Activated CD4-positive, alpha-beta T cell treated with anti-CD3 and anti-CD28 coated beads for 36 hours (primary cell): ENCODE measurements at regions of chr16 and their contacts with region 1.

Region 1: GRCh38 chr16:89720813-89721545 is at the starts of genes VPS9D1 and ZNF276:
- DNase-seq: peak; percentile 92
- ATAC-seq: peak; percentile 49
- H3K4me3 Mint-ChIP-seq: peak within 1 kb of the TSS; percentile 85
- H3K27ac Mint-ChIP-seq: peak within 1 kb of the TSS; percentile 84
- H3K4me1 Mint-ChIP-seq: peaks cover 40% of the 10 kb centered on the region
- H3K27me3 Mint-ChIP-seq: no peaks in the 10 kb centered on the region
- total RNA-seq, gene VPS9D1: 2.0 to 2.6 TPM
- total RNA-seq, gene ZNF276: 21.3 to 24.8 TPM

Region 2: DNA sequence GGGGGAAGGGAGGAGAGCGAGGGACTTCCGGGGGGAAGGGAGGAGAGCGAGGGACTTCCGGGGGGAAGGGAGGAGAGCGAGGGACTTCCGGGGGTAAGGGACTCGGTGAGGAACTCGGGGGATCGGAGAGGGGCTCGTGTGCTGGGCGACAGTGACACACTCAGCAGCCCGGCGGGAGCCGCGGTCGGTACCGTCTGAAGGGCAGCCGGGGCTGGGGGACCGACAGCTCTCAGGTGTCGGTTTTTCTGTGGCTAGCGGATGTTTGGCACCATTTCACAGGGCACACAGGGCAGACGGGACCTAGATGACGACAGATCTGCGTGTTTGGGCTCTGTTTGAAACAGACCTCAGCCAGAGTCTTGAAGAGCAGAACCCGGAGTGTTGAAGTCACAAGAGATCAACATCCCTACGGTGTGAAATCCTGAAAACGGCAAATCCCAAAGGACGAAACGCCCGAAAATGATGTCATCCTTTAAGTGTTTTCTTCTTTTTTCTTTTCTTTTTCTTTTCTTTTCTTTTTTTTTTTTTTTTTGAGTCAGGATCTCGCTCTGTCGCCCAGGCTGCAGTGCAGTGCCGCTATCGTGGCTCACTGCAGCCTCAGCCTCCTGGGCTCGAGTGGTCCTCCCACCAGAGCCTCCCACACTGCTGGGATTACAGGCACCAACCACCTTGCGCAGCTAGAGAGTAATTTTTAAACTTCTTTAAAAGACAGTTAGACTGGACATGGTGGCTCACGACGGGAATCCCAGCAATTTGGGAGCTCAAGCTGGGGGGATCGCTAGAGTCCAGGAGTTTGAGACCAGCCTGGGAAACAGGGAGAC is 479.6 kb before region 1 on chr16:
- CTCF ChIA-PET with region 1: no interaction called
- POLR2A ChIA-PET with region 1: no interaction called
- intact Hi-C with region 1: loop called in 1 of 2 experiments (anchors 1 kb)
- DNase-seq: peak; percentile 83
- ATAC-seq: peak; percentile 83
- H3K4me3 Mint-ChIP-seq: peak overlapping the region; percentile 87
- H3K27ac Mint-ChIP-seq: peak overlapping the region; percentile 100
- H3K4me1 Mint-ChIP-seq: peaks cover 14% of the 10 kb centered on the region
- H3K27me3 Mint-ChIP-seq: no peaks in the 10 kb centered on the region

Region 3: DNA sequence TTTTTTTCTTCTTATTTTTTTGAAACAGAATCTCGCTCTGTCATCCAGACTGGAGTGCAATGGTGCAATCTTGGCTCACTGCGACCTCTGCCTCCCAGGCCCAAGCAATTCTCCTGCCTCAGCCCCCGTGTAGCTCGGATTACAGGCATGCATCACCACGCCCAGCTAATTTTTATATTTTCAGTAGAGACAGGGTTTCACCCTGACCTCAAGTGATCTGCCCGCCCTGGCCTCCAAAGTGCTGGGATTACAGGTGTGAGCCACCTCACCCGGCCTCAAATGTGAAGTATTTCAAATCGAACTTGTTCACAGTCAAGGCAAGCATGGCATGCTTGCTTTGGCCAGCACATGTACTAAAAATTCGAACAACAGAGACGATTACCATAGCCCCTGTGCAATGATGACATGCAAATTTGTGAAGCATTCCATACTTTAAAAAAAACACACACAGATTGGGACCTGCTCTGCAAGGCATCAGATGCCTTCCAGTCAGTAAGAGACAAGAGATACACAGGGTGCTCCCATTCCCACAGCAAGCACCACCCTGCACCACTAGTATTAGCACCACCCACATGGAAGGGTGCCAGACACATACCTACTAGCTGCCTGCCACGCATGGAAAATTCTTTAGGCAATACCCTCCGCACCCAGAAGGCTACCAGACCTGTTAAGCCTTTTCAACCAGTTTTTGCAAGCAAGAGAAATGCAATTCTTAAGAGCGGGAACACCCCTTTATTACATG is 277.8 kb before region 1 on chr16:
- CTCF ChIA-PET with region 1: no interaction called
- POLR2A ChIA-PET with region 1: no interaction called
- intact Hi-C with region 1: no loop called
- DNase-seq: no peak
- ATAC-seq: no peak
- H3K4me3 Mint-ChIP-seq: peak overlapping the region; percentile 15
- H3K27ac Mint-ChIP-seq: peak overlapping the region; percentile 18
- H3K4me1 Mint-ChIP-seq: peaks cover 97% of the 10 kb centered on the region
- H3K27me3 Mint-ChIP-seq: no peaks in the 10 kb centered on the region

Region 4: DNA sequence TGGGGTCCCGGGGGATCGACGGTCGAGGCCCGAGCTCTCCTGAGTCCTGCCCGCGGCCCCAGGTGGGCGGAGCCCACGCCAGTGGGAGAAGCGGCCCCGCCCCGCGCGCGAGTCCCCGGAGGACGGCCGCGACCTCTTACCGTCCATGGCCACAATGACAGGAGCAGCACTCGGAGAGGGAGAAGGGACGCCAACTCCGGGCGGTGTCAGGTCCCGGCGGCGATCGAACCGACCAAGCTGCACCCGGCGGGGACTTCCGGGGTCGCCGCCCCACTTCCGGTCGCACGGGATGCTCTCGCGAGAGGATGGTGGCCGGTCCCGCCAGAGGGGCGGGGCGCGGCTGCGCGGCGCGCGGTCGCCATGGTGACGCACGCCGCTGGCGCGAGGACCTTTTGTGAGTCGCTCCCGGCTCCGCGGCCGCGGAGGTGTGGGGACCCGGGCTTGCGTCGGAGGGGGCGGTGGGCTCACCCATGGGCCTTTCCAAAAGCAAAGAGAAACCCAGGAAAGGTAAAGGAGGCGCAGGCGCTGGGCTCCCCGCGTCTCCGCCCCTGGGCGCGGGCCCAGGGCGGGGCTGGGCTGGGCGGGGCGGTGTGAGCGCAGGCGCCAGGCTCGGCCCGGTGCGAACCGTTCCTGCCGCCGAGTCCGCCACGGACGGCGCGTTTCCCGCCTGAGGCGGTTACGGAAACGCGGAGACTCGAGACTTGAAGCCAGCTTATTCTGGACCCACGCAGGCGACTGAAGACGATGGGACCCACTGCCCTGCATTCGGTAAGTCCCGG is 63.3 kb before region 1 on chr16 and contains the starts of genes CHMP1A and SPATA33:
- CTCF ChIA-PET with region 1: no interaction called
- POLR2A ChIA-PET with region 1: no interaction called
- intact Hi-C with region 1: loop called in 1 of 2 experiments (anchors 1 kb)
- DNase-seq: peak; percentile 96
- ATAC-seq: peak; percentile 93
- H3K4me3 Mint-ChIP-seq: peak within 1 kb of the TSS; percentile 90
- H3K27ac Mint-ChIP-seq: peak within 1 kb of the TSS; percentile 83
- H3K4me1 Mint-ChIP-seq: peaks cover 28% of the 10 kb centered on the region
- H3K27me3 Mint-ChIP-seq: no peaks in the 10 kb centered on the region
- total RNA-seq, gene CHMP1A: 37.9 to 67.3 TPM
- total RNA-seq, gene SPATA33: 6.8 to 11.6 TPM

Region 5: DNA sequence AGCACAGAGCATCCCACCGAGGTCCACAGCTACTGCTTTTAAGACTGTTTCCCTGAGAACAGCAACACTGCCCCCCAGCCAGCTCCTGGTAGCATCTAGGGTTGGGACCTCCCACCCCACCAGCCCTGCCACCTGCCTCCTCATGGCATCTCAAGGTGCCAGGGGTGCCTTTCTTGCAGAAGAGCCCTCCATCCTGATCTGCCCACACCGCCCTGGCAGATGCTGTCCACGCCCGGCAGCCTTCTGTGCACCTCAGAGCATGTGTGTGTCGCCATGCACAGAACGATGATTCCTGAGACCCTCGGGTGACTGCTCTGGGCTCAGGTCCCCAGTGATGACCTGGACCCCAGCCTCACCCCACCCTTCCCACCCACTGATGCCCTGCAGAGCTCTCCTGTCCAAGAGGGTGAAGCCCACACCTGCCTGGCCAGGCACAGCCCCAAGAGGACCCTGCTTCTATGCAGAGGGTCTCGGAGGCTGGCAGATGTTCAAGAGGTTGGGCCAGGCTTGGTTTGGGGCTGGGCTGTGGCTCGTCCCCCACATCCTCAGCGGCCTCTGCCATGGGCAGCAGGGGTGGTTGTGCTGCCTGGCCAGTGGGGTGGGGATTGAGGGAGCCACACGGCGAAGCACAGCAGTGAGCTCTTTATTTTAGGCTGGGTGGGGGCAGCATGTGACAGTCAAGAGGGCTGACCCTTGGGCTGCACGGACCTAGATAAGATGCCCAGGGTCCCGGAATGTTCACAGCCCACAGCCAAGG is 14.3 kb before region 1 on chr16:
- CTCF ChIA-PET with region 1: interaction called, 12 read pairs
- POLR2A ChIA-PET with region 1: interaction called, 5 read pairs
- intact Hi-C with region 1: loop called in 1 of 2 experiments (anchors 1 kb)
- DNase-seq: no peak
- ATAC-seq: no peak
- H3K4me3 Mint-ChIP-seq: no peak overlapping the region
- H3K27ac Mint-ChIP-seq: no peak overlapping the region
- H3K4me1 Mint-ChIP-seq: peaks cover 10% of the 10 kb centered on the region
- H3K27me3 Mint-ChIP-seq: no peaks in the 10 kb centered on the region

Region 6: DNA sequence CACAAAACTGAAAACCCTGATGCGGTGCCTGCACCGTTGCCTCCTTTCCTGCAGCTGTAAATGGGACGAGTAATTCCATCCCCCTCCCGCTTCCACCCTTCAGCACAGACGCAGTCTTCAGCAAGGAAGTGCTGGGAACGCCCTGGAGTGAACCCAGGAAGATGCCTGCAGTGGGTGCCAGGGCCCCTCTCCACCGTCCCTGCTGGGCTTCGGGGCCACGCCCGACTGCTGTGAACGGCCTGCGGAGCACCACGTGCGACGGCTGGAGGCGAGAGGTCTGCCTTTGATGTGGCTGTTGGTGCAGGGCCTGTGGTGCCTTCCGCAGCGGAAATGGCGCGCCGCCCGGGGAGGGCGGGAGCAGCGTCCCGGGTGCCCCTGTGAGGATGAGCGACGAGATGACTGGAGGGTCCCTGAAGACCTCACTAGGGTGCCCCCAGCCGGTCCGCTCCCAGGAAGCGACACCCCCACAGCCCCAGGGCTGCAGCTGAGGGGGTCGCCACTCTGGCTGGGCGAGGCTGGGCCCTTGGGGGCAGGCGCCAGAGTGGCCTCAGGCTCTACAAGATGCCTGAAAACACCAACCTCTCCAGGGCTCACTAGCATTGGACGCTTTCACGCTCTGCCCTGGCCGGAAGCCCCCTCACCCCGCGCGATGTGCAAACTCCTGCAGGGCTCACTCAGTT is 196.9 kb after region 1 on chr16:
- CTCF ChIA-PET with region 1: no interaction called
- POLR2A ChIA-PET with region 1: no interaction called
- intact Hi-C with region 1: loop called (anchors 5 kb)
- DNase-seq: peak; percentile 89
- ATAC-seq: peak; percentile 75
- H3K4me3 Mint-ChIP-seq: peak overlapping the region; percentile 50
- H3K27ac Mint-ChIP-seq: no peak overlapping the region
- H3K4me1 Mint-ChIP-seq: peaks cover 43% of the 10 kb centered on the region
- H3K27me3 Mint-ChIP-seq: peaks cover 25% of the 10 kb centered on the region